ENCODE measurements at regions of chr5 and their contacts with region 1.

Region 1: GRCh38 chr5:44300551-44300950 is 88.7 kb downstream of the FGF10 start:
- DNase-seq: no peak
- H3K4me3 Mint-ChIP-seq: no peak overlapping the region
- H3K27ac Mint-ChIP-seq: no peak overlapping the region
- H3K4me1 Mint-ChIP-seq: no peaks in the 10 kb centered on the region
- H3K27me3 Mint-ChIP-seq: no peaks in the 10 kb centered on the region
- CTCF ChIP-seq: no peak

Region 2: GRCh38 chr5:44377057-44377456 is 76.5 kb after region 1 on chr5:
- CTCF ChIA-PET with region 1: interaction called, 14 read pairs
- intact Hi-C with region 1: no loop called
- DNase-seq: no peak
- H3K4me3 Mint-ChIP-seq: no peak overlapping the region
- H3K27ac Mint-ChIP-seq: no peak overlapping the region
- H3K4me1 Mint-ChIP-seq: no peaks in the 10 kb centered on the region
- H3K27me3 Mint-ChIP-seq: no peaks in the 10 kb centered on the region
- CTCF ChIP-seq: no peak